Naive thymus-derived CD4-positive, alpha-beta T cell (primary cell): ENCODE measurements at regions of chr20 and their contacts with region 1.

Region 1: DNA sequence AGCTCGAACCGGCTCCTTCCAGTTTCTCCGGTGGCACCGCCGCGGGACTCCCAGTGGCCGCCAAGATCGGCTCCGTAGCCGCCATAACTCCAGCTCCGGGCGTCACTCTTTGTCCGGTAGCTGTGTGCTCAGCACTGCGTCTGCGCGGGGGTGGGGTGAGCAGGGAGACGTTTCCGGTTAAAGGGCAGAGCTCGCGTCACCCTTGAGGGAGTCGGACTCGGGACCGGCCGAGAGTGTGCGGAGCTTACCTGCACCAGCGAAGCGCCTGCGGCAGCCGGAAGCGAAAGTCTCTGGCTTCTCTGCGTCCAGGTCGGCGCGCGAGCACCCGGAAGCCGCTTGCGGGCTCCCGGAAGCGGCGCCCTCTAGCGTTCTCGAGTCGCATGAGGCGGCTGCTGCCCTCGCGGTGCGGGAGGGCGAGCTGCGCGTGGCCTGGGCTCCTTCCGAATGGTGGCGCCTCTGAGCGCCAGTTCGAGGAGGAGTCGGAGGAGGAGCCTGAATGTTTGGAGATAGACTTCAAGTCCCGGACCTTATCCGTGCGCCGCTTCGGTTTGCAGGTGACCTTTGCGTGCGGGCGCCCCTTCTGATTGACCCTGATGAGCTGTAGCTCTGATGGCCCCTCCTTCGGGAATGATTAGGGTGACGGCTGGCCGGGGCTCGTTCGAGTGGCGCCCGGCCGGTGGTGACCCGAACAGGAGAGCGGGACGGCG is at the start of gene SCAND1:
- DNase-seq: peak; percentile 94 to 98 (median 97)
- ATAC-seq: peak; percentile 92
- H3K4me3 ChIP-seq: peak within 1 kb of the TSS; percentile 84
- H3K4me3 Mint-ChIP-seq: peak within 1 kb of the TSS; percentile 86 to 99 (median 99)
- H3K27ac ChIP-seq: peak within 1 kb of the TSS; percentile 98
- H3K27ac Mint-ChIP-seq: peak within 1 kb of the TSS; percentile 96 to 100 (median 99)
- H3K4me1 ChIP-seq: peaks cover 17 to 23% of the 10 kb centered on the region in 2 donors
- H3K4me1 Mint-ChIP-seq: peaks cover 13 to 36% (median 22%) of the 10 kb centered on the region in 7 donors
- H3K27me3 ChIP-seq: no peaks in the 10 kb centered on the region
- H3K27me3 Mint-ChIP-seq: peaks cover 0 to 2% (median 0%) of the 10 kb centered on the region in 5 donors
- total RNA-seq, gene SCAND1: 41.8 to 56.2 (median 51.7) TPM

Region 2: DNA sequence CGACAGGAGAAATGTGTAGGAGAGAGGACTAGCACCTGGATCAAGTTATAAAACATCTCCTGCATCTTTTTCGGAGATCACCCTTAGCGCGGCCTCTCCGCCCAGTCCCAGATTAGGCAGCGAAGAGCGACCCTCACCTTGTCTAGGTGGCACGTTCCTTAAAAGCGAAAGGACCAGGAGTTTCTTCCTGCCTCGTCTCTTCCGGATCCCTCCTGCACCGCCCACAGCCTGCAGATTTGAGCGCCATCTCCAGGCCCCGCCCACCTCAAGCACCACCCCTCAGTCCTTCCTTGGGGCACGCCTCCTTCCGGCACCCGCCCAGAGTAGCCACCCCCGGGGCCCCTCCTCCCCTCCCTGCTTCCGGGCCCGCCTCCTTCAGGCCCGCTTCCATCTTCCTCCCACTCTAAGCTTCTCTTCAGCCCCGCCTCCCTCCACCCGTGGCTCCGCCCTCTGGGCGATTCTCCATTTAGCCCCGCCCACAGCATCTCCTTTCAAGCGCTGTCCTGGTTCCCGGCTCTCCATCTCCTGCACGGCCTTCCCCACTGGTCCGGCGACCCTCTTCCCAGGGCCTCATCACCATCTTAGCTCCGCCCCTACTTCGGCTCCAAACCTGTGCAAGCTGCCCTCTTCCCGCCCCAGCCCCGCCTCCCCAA is 1961.3 kb before region 1 on chr20:
- CTCF ChIA-PET with region 1: no interaction called
- POLR2A ChIA-PET with region 1: interaction called, 9 read pairs
- intact Hi-C with region 1: loop called in 1 of 2 experiments (anchors 2 kb)
- DNase-seq: peak; percentile 97 to 100 (median 100)
- ATAC-seq: peak; percentile 91
- H3K4me3 ChIP-seq: peak overlapping the region; percentile 96
- H3K4me3 Mint-ChIP-seq: peak overlapping the region; percentile 87 to 99 (median 96)
- H3K27ac ChIP-seq: peak overlapping the region; percentile 97
- H3K27ac Mint-ChIP-seq: peak overlapping the region; percentile 91 to 99 (median 96)
- H3K4me1 ChIP-seq: peaks cover 32 to 43% of the 10 kb centered on the region in 2 donors
- H3K4me1 Mint-ChIP-seq: peaks cover 44 to 69% (median 60%) of the 10 kb centered on the region in 7 donors
- H3K27me3 ChIP-seq: no peaks in the 10 kb centered on the region
- H3K27me3 Mint-ChIP-seq: no peaks in the 10 kb centered on the region

Region 3: GRCh38 chr20:34621383-34622367 is 1332.7 kb before region 1 on chr20:
- CTCF ChIA-PET with region 1: no interaction called
- POLR2A ChIA-PET with region 1: no interaction called
- intact Hi-C with region 1: no loop called
- DNase-seq: no peak
- ATAC-seq: no peak
- H3K4me3 ChIP-seq: no peak overlapping the region
- H3K4me3 Mint-ChIP-seq: no peak overlapping the region
- H3K27ac ChIP-seq: no peak overlapping the region
- H3K27ac Mint-ChIP-seq: peak overlapping the region in 2 of 9 donors; percentile 22 to 35
- H3K4me1 ChIP-seq: no peaks in the 10 kb centered on the region
- H3K4me1 Mint-ChIP-seq: peaks cover 0 to 27% (median 0%) of the 10 kb centered on the region in 7 donors
- H3K27me3 ChIP-seq: no peaks in the 10 kb centered on the region
- H3K27me3 Mint-ChIP-seq: no peaks in the 10 kb centered on the region

Region 4: GRCh38 chr20:34876162-34877001 is 1078.0 kb before region 1 on chr20 and contains the start of gene ACSS2:
- CTCF ChIA-PET with region 1: no interaction called
- POLR2A ChIA-PET with region 1: no interaction called
- intact Hi-C with region 1: loop called in 1 of 2 experiments (anchors 1 kb)
- DNase-seq: peak; percentile 88 to 99 (median 92)
- ATAC-seq: peak; percentile 91
- H3K4me3 ChIP-seq: peak within 1 kb of the TSS; percentile 87
- H3K4me3 Mint-ChIP-seq: peak within 1 kb of the TSS; percentile 78 to 99 (median 90)
- H3K27ac ChIP-seq: peak within 1 kb of the TSS; percentile 74
- H3K27ac Mint-ChIP-seq: peak within 1 kb of the TSS; percentile 68 to 96 (median 88)
- H3K4me1 ChIP-seq: peaks cover 35 to 43% of the 10 kb centered on the region in 2 donors
- H3K4me1 Mint-ChIP-seq: peaks cover 47 to 79% (median 72%) of the 10 kb centered on the region in 7 donors
- H3K27me3 ChIP-seq: no peaks in the 10 kb centered on the region
- H3K27me3 Mint-ChIP-seq: no peaks in the 10 kb centered on the region
- total RNA-seq, gene ACSS2: 37.3 to 51.7 (median 43.3) TPM

Region 5: GRCh38 chr20:35490736-35491181 is 463.6 kb before region 1 on chr20:
- CTCF ChIA-PET with region 1: no interaction called
- POLR2A ChIA-PET with region 1: interaction called, 13 read pairs
- intact Hi-C with region 1: no loop called
- DNase-seq: peak; percentile 27 to 77 (median 67)
- ATAC-seq: peak; percentile 99
- H3K4me3 ChIP-seq: peak overlapping the region; percentile 92
- H3K4me3 Mint-ChIP-seq: peak overlapping the region; percentile 99 to 100 (median 99)
- H3K27ac ChIP-seq: peak overlapping the region; percentile 84
- H3K27ac Mint-ChIP-seq: peak overlapping the region; percentile 98 to 100 (median 99)
- H3K4me1 ChIP-seq: peaks cover 23 to 27% of the 10 kb centered on the region in 2 donors
- H3K4me1 Mint-ChIP-seq: peaks cover 47 to 92% (median 72%) of the 10 kb centered on the region in 7 donors
- H3K27me3 ChIP-seq: no peaks in the 10 kb centered on the region
- H3K27me3 Mint-ChIP-seq: no peaks in the 10 kb centered on the region

Region 6: GRCh38 chr20:35771689-35772562 is 182.4 kb before region 1 on chr20 and contains the start of gene PHF20:
- CTCF ChIA-PET with region 1: interaction called, 6 read pairs
- POLR2A ChIA-PET with region 1: interaction called, 23 read pairs
- intact Hi-C with region 1: loop called (anchors 1 kb)
- DNase-seq: peak; percentile 98 to 100 (median 99)
- ATAC-seq: peak; percentile 90
- H3K4me3 ChIP-seq: peak within 1 kb of the TSS; percentile 59
- H3K4me3 Mint-ChIP-seq: peak within 1 kb of the TSS; percentile 84 to 97 (median 94)
- H3K27ac ChIP-seq: peak within 1 kb of the TSS; percentile 98
- H3K27ac Mint-ChIP-seq: peak within 1 kb of the TSS; percentile 96 to 100 (median 100)
- H3K4me1 ChIP-seq: peaks cover 76 to 78% of the 10 kb centered on the region in 2 donors
- H3K4me1 Mint-ChIP-seq: peaks cover 52 to 88% (median 74%) of the 10 kb centered on the region in 7 donors
- H3K27me3 ChIP-seq: no peaks in the 10 kb centered on the region
- H3K27me3 Mint-ChIP-seq: no peaks in the 10 kb centered on the region
- total RNA-seq, gene PHF20: 57.5 to 157 (median 78.0) TPM

Region 7: GRCh38 chr20:36460648-36461599 is 506.6 kb after region 1 on chr20:
- CTCF ChIA-PET with region 1: no interaction called
- POLR2A ChIA-PET with region 1: interaction called, 3 read pairs
- intact Hi-C with region 1: loop called (anchors 1 to 10 kb)
- DNase-seq: peak; percentile 76 to 89 (median 86)
- ATAC-seq: peak; percentile 93
- H3K4me3 ChIP-seq: peak overlapping the region; percentile 73
- H3K4me3 Mint-ChIP-seq: peak overlapping the region; percentile 74 to 97 (median 83)
- H3K27ac ChIP-seq: peak overlapping the region; percentile 85
- H3K27ac Mint-ChIP-seq: peak overlapping the region; percentile 88 to 97 (median 95)
- H3K4me1 ChIP-seq: peaks cover 38 to 39% of the 10 kb centered on the region in 2 donors
- H3K4me1 Mint-ChIP-seq: peaks cover 34 to 51% (median 45%) of the 10 kb centered on the region in 7 donors
- H3K27me3 ChIP-seq: no peaks in the 10 kb centered on the region
- H3K27me3 Mint-ChIP-seq: peaks cover 0 to 6% (median 0%) of the 10 kb centered on the region in 5 donors